ENCODE measurements at regions of chr4 and their contacts with region 1.

Region 1: GRCh38 chr4:140851032-140851636 is 94.9 kb upstream of the TBC1D9 start:
- DNase-seq: no peak
- ATAC-seq: peak; percentile 88
- H3K4me3 Mint-ChIP-seq: no peak overlapping the region
- H3K27ac Mint-ChIP-seq: peak overlapping the region; percentile 55
- H3K4me1 Mint-ChIP-seq: peaks cover 24% of the 10 kb centered on the region
- H3K27me3 Mint-ChIP-seq: no peaks in the 10 kb centered on the region
- CTCF ChIP-seq: no peak

Region 2: DNA sequence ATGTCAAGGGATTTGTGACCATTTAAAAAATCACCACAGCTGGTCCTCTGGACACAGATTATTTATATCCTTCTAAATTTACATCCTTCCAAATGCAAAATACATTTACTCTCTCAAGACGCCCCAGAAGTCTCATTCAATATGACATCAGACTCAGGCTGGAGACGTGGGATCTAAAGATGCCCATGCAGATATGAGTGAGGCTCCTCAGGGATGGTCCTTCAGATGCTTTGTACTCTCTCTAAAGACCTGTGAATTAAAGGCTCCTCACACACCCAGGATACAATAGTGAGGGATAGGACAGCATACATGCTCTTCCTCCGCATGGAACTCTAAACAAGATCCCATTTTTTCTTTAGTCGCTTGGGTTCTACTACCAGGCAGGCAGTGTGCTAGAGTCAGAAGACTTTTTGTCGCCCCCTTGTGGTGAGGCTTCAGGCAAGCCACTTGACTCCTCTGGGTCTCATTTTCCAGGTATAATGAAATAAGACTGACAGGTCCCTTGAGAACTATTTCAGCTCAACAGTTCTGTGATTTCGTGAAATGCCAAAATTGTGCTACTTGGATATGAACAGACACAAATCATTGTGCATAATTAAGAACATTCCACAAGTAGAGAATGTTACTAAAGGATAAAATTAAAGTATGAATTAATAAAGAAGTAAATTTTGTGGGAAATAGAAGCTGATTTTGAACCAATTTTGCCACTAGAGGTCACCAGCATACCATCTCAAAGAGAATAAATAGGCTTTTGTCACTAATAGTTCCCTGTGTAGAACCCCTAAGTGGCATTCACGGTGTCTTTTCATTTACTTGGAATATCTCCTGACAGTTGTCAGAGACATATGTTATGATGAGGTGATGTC is 491.3 kb before region 1 on chr4:
- CTCF ChIA-PET with region 1: interaction called, 17 read pairs
- POLR2A ChIA-PET with region 1: no interaction called
- intact Hi-C with region 1: loop called (anchors 1 kb)
- DNase-seq: peak; percentile 27
- ATAC-seq: peak; percentile 91
- H3K4me3 Mint-ChIP-seq: no peak overlapping the region
- H3K27ac Mint-ChIP-seq: no peak overlapping the region
- H3K4me1 Mint-ChIP-seq: no peaks in the 10 kb centered on the region
- H3K27me3 Mint-ChIP-seq: peaks cover 12% of the 10 kb centered on the region
- CTCF ChIP-seq: peak; percentile 93

Region 3: DNA sequence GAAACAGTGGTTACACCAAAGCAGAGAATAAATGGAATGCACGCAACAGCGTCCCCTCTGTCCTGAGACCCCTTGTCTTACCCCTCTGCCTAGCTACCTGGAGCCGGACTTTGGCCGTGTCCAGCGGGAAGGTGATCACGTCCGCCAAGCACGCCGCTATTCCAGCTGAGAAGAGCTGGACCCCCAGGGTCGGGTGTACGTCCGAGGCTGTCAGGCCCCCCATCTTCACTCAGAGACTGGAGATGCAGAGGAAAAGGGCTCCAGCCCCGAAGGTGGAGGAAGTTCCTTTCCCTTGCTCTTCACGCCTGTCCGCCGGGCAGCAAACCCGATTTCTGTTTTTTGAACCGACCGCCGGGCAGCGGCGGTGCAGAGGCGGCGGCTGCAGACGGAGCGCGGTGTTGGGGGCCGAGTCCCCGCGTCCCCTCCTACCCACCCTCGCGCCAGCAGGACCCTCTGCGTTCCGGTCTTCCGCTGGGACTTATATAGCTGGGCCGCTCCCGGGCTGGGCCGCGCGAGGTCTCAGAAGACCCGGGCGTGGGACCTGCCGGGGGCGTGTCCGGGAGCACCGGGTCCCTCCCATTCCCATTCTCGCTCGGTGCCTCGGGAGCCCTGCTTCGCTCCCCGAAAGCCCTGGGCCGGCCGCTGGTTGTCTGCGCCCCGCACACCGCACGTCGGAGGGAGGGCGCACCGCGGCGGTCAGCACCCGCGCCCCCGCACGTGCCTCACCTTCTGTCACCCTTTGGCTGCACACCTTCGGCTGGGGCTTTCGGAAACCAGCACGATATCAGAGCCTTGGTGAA is 282.4 kb before region 1 on chr4 and contains the start of gene UCP1:
- CTCF ChIA-PET with region 1: no interaction called
- POLR2A ChIA-PET with region 1: no interaction called
- intact Hi-C with region 1: no loop called
- DNase-seq: peak; percentile 24
- ATAC-seq: peak; percentile 52
- H3K4me3 Mint-ChIP-seq: peak within 1 kb of the TSS; percentile 81
- H3K27ac Mint-ChIP-seq: no peak within 1 kb of the TSS
- H3K4me1 Mint-ChIP-seq: peaks cover 23% of the 10 kb centered on the region
- H3K27me3 Mint-ChIP-seq: peaks cover 38% of the 10 kb centered on the region
- CTCF ChIP-seq: no peak
- total RNA-seq, gene UCP1: not detected in 2 replicates

Region 4: GRCh38 chr4:140595065-140595464 is 256.1 kb before region 1 on chr4:
- CTCF ChIA-PET with region 1: interaction called, 14 read pairs
- POLR2A ChIA-PET with region 1: no interaction called
- intact Hi-C with region 1: loop called (anchors 1 kb)
- DNase-seq: no peak
- ATAC-seq: peak; percentile 70
- H3K4me3 Mint-ChIP-seq: no peak overlapping the region
- H3K27ac Mint-ChIP-seq: no peak overlapping the region
- H3K4me1 Mint-ChIP-seq: no peaks in the 10 kb centered on the region
- H3K27me3 Mint-ChIP-seq: peaks cover 29% of the 10 kb centered on the region
- CTCF ChIP-seq: no peak

Region 5: GRCh38 chr4:140673729-140674128 is 177.4 kb before region 1 on chr4:
- CTCF ChIA-PET with region 1: interaction called, 3 read pairs
- POLR2A ChIA-PET with region 1: no interaction called
- intact Hi-C with region 1: loop called (anchors 2 kb)
- DNase-seq: no peak
- ATAC-seq: no peak
- H3K4me3 Mint-ChIP-seq: no peak overlapping the region
- H3K27ac Mint-ChIP-seq: no peak overlapping the region
- H3K4me1 Mint-ChIP-seq: peaks cover 21% of the 10 kb centered on the region
- H3K27me3 Mint-ChIP-seq: no peaks in the 10 kb centered on the region
- CTCF ChIP-seq: no peak

Region 6: DNA sequence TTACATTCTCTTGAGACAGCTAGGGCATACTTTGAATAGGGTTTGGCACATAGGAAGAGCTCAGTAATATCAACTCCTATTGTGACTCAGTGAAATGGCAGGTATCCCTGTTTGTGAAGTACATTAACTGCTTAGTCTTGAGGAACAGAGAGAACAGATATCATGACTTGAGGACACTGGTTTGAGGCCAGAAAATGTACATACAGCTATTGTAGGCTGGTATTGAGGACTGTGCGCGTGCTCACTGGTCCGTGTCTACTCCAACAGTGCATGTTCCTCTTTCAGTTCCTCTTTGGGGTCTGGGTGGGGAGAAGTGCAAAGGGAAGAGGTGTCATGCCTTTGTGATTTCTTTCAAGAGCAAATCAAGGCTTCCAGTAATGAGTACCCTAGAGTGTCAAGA is 60.4 kb before region 1 on chr4:
- CTCF ChIA-PET with region 1: interaction called, 10 read pairs
- POLR2A ChIA-PET with region 1: interaction called, 6 read pairs
- intact Hi-C with region 1: loop called (anchors 1 kb)
- DNase-seq: peak; percentile 67
- ATAC-seq: peak; percentile 93
- H3K4me3 Mint-ChIP-seq: peak overlapping the region; percentile 48
- H3K27ac Mint-ChIP-seq: peak overlapping the region; percentile 71
- H3K4me1 Mint-ChIP-seq: peaks cover 76% of the 10 kb centered on the region
- H3K27me3 Mint-ChIP-seq: no peaks in the 10 kb centered on the region
- CTCF ChIP-seq: no peak

Region 7: DNA sequence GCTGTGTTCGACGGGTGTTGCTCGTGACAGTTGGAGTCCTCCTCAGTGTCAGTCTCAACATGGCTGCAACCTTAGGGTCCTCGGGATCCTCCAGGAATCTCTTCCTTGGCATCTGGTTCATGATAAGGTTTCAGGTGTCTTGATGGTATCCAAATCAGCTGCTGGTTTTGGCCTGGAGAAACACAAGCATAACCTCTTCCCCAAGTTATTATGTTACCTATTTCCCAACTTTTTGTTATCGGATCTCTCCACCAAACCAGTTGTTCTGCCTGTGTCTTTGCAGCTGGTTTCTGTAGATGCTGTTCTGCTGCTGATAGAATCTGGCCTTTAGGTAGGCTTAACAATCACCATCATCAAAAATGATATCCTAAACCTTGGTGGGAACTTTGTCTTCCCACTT is 1088.2 kb after region 1 on chr4:
- CTCF ChIA-PET with region 1: no interaction called
- POLR2A ChIA-PET with region 1: no interaction called
- intact Hi-C with region 1: no loop called
- DNase-seq: no peak
- ATAC-seq: no peak
- H3K4me3 Mint-ChIP-seq: no peak overlapping the region
- H3K27ac Mint-ChIP-seq: no peak overlapping the region
- H3K4me1 Mint-ChIP-seq: no peaks in the 10 kb centered on the region
- H3K27me3 Mint-ChIP-seq: no peaks in the 10 kb centered on the region
- CTCF ChIP-seq: no peak

Measured in activated B cell treated with CpG ODN at 0.5 μM for 24 hours (primary cell).